Activated CD4-positive, alpha-beta memory T cell treated with anti-CD3 and anti-CD28 coated beads for 36 hours (primary cell): ENCODE measurements at regions of chr4 and their contacts with region 1.

Region 1: GRCh38 chr4:98658287-98659105 is at the start of gene TSPAN5:
- DNase-seq: peak; percentile 87
- H3K4me3 Mint-ChIP-seq: peak within 1 kb of the TSS; percentile 87
- H3K27ac Mint-ChIP-seq: peak within 1 kb of the TSS; percentile 79
- H3K4me1 Mint-ChIP-seq: peaks cover 78% of the 10 kb centered on the region
- H3K27me3 Mint-ChIP-seq: no peaks in the 10 kb centered on the region
- total RNA-seq, gene TSPAN5: 19.2 to 20.4 TPM

Region 2: DNA sequence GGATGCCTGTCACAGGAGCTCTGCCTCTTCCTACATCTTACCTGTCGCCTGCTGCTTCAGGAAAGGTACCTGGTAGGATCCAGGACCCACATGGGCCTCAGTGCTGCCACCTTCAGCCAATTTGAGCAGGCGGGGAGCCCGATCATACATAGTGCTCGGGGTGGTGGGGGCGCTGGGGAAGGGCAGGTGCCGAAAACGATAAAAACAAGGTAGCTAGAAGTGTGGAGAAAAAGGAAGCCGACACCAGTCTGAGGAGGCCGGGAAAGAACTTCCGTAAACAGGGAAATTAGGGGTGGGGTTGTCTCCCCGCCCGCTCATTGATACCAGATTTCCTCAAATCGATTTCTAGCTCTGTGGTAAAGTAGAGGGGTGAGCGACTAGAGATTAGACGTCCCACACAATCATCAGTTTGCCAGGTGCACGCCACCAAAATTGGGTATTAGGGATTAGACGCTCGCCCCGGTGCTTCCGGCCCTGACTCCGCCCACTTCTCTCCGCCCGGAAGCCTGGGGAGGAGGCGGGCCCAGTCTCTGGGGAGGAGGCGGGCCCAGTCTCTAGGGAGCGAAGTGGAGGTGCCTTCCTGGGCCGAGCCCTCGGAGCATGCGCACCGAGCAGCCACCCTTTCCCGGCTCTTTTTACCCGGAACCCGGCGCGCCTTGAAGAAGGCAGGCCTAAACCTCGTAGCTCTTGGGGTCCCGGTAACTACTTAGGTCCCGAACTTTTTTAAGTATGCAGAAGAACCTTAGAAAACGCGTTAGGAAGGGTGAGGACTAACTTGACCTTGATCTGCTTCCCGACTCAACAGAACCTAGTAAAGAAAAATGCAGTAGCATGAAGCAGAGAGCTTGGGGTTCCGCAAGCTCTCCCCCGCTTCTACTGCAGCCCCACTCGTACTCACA is 515.2 kb before region 1 on chr4 and contains the start of gene STPG2:
- CTCF ChIA-PET with region 1: no interaction called
- POLR2A ChIA-PET with region 1: no interaction called
- intact Hi-C with region 1: loop called (anchors 5 kb)
- DNase-seq: peak; percentile 95
- H3K4me3 Mint-ChIP-seq: peak within 1 kb of the TSS; percentile 95
- H3K27ac Mint-ChIP-seq: peak within 1 kb of the TSS; percentile 98
- H3K4me1 Mint-ChIP-seq: peaks cover 20% of the 10 kb centered on the region
- H3K27me3 Mint-ChIP-seq: no peaks in the 10 kb centered on the region
- total RNA-seq, gene STPG2: not detected

Region 3: GRCh38 chr4:98467627-98468072 is 190.8 kb before region 1 on chr4:
- CTCF ChIA-PET with region 1: interaction called, 20 read pairs
- POLR2A ChIA-PET with region 1: interaction called, 3 read pairs
- intact Hi-C with region 1: loop called (anchors 2 kb)
- DNase-seq: peak; percentile 82
- H3K4me3 Mint-ChIP-seq: peak overlapping the region; percentile 67
- H3K27ac Mint-ChIP-seq: no peak overlapping the region
- H3K4me1 Mint-ChIP-seq: peaks cover 27% of the 10 kb centered on the region
- H3K27me3 Mint-ChIP-seq: no peaks in the 10 kb centered on the region

Region 4: GRCh38 chr4:98601708-98602107 is 56.8 kb before region 1 on chr4:
- CTCF ChIA-PET with region 1: interaction called, 4 read pairs
- POLR2A ChIA-PET with region 1: interaction called, 20 read pairs
- intact Hi-C with region 1: loop called (anchors 1 kb)
- DNase-seq: peak; percentile 54
- H3K4me3 Mint-ChIP-seq: peak overlapping the region; percentile 54
- H3K27ac Mint-ChIP-seq: peak overlapping the region; percentile 82
- H3K4me1 Mint-ChIP-seq: peaks cover 55% of the 10 kb centered on the region
- H3K27me3 Mint-ChIP-seq: no peaks in the 10 kb centered on the region

Region 5: DNA sequence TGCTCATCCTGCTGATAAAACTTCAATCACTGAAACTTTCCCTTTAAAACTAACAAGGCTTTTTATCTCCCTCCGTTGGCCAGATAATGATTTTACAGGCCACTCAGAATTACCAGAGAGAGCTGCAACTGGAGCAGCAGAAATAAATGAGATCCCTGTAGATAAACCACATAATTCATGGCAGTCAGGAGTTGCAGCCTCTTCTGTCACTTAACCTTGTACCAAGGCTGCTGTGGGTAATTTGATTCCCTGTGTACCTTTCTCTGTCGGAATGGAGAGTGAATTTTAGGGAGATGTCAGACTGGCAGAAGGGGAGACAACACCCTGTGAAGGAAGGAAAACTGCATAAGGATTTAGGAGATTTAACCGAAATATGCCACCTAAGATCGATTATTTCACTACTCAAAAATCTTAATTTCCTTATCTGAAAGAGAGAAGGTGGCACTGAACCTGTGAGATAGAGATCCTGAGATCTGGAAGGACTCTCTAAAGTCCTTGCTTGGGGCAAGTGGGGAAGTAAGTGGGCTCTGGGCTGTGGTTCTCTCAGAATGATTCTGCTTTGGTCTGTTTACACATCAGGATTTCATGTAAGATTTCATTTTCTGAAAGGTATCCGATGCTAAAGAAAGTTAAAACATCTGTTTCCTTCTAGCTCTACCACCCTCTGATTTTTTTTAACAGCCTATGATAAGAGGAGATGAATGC is 14.2 kb after region 1 on chr4:
- CTCF ChIA-PET with region 1: no interaction called
- POLR2A ChIA-PET with region 1: no interaction called
- intact Hi-C with region 1: no loop called
- DNase-seq: no peak
- H3K4me3 Mint-ChIP-seq: no peak overlapping the region
- H3K27ac Mint-ChIP-seq: no peak overlapping the region
- H3K4me1 Mint-ChIP-seq: peaks cover 20% of the 10 kb centered on the region
- H3K27me3 Mint-ChIP-seq: peaks cover 4% of the 10 kb centered on the region

Region 6: DNA sequence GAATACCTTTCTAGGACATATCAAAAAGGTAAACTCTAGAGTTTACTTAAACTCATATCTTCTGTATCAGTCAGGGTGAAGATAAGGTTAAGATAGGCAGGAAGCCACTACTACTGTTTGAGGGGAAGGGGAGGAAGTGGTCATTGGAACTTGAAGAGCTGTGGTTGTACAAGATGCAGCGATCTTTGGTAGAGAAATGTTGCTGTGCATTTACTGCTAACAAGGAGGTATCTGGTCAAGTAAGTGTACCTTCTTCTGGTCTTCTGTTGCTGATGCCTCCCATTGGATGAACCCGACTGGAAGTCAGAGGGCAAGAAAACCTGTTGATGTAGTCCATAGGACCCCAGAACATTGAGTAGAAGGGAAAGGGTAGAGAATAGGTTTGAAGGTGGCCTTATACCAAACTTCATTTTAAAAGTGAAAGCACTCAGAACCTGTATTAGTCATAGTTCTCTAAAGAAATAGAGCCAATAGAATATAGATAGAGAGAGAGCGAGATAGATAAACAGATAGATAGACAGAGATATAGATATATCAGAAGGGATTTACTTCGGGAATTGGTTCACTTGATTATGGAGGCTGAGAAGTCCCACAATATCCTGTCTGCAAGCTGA is 47.8 kb after region 1 on chr4:
- CTCF ChIA-PET with region 1: no interaction called
- POLR2A ChIA-PET with region 1: no interaction called
- intact Hi-C with region 1: loop called (anchors 1 kb)
- DNase-seq: peak; percentile 34
- H3K4me3 Mint-ChIP-seq: peak overlapping the region; percentile 51
- H3K27ac Mint-ChIP-seq: peak overlapping the region; percentile 69
- H3K4me1 Mint-ChIP-seq: peaks cover 26% of the 10 kb centered on the region
- H3K27me3 Mint-ChIP-seq: no peaks in the 10 kb centered on the region

Region 7: GRCh38 chr4:98995183-98996055 is 336.9 kb after region 1 on chr4 and contains the start of gene METAP1:
- CTCF ChIA-PET with region 1: no interaction called
- POLR2A ChIA-PET with region 1: interaction called, 8 read pairs
- intact Hi-C with region 1: loop called (anchors 1 kb)
- DNase-seq: peak; percentile 97
- H3K4me3 Mint-ChIP-seq: peak within 1 kb of the TSS; percentile 88
- H3K27ac Mint-ChIP-seq: peak within 1 kb of the TSS; percentile 96
- H3K4me1 Mint-ChIP-seq: peaks cover 37% of the 10 kb centered on the region
- H3K27me3 Mint-ChIP-seq: no peaks in the 10 kb centered on the region
- total RNA-seq, gene METAP1: 60.7 to 61.1 TPM

Region 8: GRCh38 chr4:99013402-99013843 is 354.9 kb after region 1 on chr4:
- CTCF ChIA-PET with region 1: no interaction called
- POLR2A ChIA-PET with region 1: no interaction called
- intact Hi-C with region 1: no loop called
- DNase-seq: no peak
- H3K4me3 Mint-ChIP-seq: no peak overlapping the region
- H3K27ac Mint-ChIP-seq: no peak overlapping the region
- H3K4me1 Mint-ChIP-seq: peaks cover 24% of the 10 kb centered on the region
- H3K27me3 Mint-ChIP-seq: no peaks in the 10 kb centered on the region

Region 9: DNA sequence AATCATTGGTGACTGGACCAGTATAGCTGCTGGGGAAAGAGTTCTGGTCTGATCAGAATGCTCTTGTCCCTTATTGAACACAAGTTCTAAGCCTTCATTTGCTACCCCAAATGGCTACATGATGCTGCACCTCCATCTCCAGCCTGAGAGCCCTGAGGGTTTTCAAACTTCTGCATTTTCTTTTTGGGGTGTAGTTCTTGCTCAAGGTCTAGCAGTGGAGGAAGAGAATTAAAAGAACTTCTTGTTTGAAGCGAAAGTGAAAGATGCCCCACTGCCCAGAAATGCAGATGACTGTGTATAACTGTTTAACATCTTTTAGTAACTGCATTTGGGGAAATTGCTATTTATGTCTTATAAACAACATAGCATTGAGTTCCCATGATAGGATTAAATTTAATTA is 1197.2 kb after region 1 on chr4:
- CTCF ChIA-PET with region 1: no interaction called
- POLR2A ChIA-PET with region 1: no interaction called
- intact Hi-C with region 1: loop called (anchors 10 kb)
- DNase-seq: peak; percentile 37
- H3K4me3 Mint-ChIP-seq: no peak overlapping the region
- H3K27ac Mint-ChIP-seq: peak overlapping the region; percentile 7
- H3K4me1 Mint-ChIP-seq: peaks cover 70% of the 10 kb centered on the region
- H3K27me3 Mint-ChIP-seq: no peaks in the 10 kb centered on the region